GM12878 (cell line): ENCODE measurements at regions of chr2 and their contacts with region 1.

Region 1: DNA sequence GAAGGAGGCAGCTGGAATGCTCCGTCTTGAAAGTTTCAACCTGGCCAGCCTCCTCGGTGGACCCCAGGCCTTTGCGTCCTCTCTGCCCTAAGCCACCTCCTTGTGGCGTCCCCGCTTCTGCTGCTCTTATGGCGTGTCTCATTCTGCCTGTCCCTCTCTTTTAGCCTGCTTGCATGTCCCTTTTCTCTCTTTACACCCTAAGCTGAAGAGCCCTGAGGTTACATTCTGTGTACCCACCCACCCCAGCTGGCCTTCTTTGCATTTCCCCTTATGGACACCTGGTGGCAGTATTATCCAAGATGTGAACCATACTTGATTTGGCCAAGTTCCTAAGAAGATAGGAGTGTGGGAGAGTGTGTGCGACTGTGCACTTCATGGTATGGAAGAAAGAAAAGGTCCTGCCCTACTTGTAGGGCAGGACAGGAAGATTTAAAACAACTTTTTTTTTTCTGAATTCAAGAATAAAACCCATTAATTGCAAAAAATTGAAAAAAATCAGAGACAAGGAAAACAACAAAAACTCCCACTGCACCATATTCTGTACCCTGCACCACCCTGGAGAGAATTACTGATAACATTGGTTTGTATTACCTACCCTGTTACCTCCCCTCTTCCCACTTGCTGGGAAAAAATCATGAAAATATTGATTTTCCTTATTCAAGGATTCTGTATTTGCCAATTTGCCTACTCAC is 77.4 kb downstream of the DYSF start:
- DNase-seq: no peak
- ATAC-seq: peak; percentile 87
- H3K4me3 ChIP-seq: no peak overlapping the region
- H3K27ac ChIP-seq: no peak overlapping the region
- H3K4me1 ChIP-seq: no peaks in the 10 kb centered on the region
- H3K27me3 ChIP-seq: peaks cover 0 to 1% of the 10 kb centered on the region in 2 experiments; a peak in 2 of 4 replicates
- CTCF ChIP-seq: peak; percentile 56 to 66 (median 65); a peak in 5 of 6 replicates
- EP300 ChIP-seq: no peak
- POLR2A ChIP-seq: no peak
- RAD21 ChIP-seq: peak; percentile 65

Region 2: GRCh38 chr2:71592181-71592711 is 61.5 kb after region 1 on chr2:
- CTCF ChIA-PET with region 1: no interaction called
- POLR2A ChIA-PET with region 1: no interaction called
- RAD21 ChIA-PET with region 1: no interaction called
- SMC1A ChIA-PET with region 1: no interaction called
- in situ Hi-C with region 1: no loop called
- intact Hi-C with region 1: no loop called
- DNase-seq: no peak
- ATAC-seq: no peak
- H3K4me3 ChIP-seq: no peak overlapping the region
- H3K27ac ChIP-seq: no peak overlapping the region
- H3K4me1 ChIP-seq: no peaks in the 10 kb centered on the region
- H3K27me3 ChIP-seq: no peaks in the 10 kb centered on the region; a peak in 1 of 4 replicates
- CTCF ChIP-seq: no peak
- EP300 ChIP-seq: no peak
- POLR2A ChIP-seq: no peak
- RAD21 ChIP-seq: no peak

Region 3: DNA sequence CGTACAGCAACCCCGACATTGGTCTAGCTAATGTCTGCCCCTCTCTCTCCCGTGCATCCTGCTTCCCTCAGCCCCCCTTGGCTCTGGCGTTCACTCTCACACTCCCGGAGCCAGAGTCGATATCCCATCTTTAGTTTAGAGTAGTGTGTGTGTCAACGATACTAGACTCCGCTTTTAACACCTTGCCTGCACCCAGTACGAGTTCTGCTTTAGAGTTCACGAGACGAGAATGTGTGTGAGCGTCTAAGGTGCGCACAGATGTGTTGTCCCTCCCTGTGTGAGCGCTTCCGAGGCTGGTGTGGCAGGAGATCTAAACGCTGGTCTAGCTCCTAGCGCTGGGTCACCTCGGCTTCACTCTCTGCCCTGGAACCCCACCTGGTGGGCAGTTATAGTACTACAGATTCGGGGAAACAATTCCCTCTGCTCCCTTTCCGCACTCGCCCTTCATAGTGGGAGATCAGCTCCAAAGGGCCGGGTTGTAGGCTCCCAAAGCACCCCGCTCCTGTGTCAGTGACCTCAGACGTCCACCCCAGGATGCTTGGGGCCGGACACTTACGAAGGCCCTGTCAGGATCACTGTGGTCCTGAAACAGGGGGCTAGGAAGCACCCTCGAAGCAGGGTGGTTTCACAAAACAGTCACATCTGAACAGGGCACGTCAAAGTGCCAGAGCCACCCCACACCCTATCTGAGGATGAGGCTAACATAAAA is 619.5 kb after region 1 on chr2:
- CTCF ChIA-PET with region 1: interaction called, 3 read pairs
- POLR2A ChIA-PET with region 1: no interaction called
- RAD21 ChIA-PET with region 1: no interaction called
- SMC1A ChIA-PET with region 1: no interaction called
- in situ Hi-C with region 1: no loop called
- intact Hi-C with region 1: loop called (anchors 5 kb)
- DNase-seq: peak; percentile 5
- ATAC-seq: peak; percentile 92
- H3K4me3 ChIP-seq: no peak overlapping the region
- H3K27ac ChIP-seq: no peak overlapping the region
- H3K4me1 ChIP-seq: no peaks in the 10 kb centered on the region
- H3K27me3 ChIP-seq: peaks cover 14% of the 10 kb centered on the region in 2 experiments; a peak in 3 of 4 replicates
- CTCF ChIP-seq: peak; percentile 68 to 77 (median 73)
- EP300 ChIP-seq: no peak
- POLR2A ChIP-seq: no peak
- RAD21 ChIP-seq: peak; percentile 73